ENCODE measurements at regions of chr4 and their contacts with region 1.

Region 1: GRCh38 chr4:127880764-127881562 is at the start of gene PLK4:
- DNase-seq: peak; percentile 99
- H3K4me3 Mint-ChIP-seq: peak within 1 kb of the TSS; percentile 97
- H3K27ac Mint-ChIP-seq: peak within 1 kb of the TSS; percentile 93
- H3K4me1 Mint-ChIP-seq: peaks cover 25% of the 10 kb centered on the region
- H3K27me3 Mint-ChIP-seq: peaks cover 2% of the 10 kb centered on the region
- total RNA-seq, gene PLK4: 44.5 and 44.7 TPM in 2 replicates

Region 2: GRCh38 chr4:127782274-127783025 is 98.5 kb before region 1 on chr4 and contains the start of gene HSPA4L:
- intact Hi-C with region 1: loop called (anchors 1 kb)
- DNase-seq: peak; percentile 89
- H3K4me3 Mint-ChIP-seq: peak within 1 kb of the TSS; percentile 94
- H3K27ac Mint-ChIP-seq: peak within 1 kb of the TSS; percentile 91
- H3K4me1 Mint-ChIP-seq: peaks cover 18% of the 10 kb centered on the region
- H3K27me3 Mint-ChIP-seq: peaks cover 72% of the 10 kb centered on the region
- total RNA-seq, gene HSPA4L: 1.3 and 1.7 TPM in 2 replicates

Region 3: GRCh38 chr4:127870688-127871087 is 10.3 kb before region 1 on chr4:
- intact Hi-C with region 1: loop called (anchors 1 kb)
- DNase-seq: no peak
- H3K4me3 Mint-ChIP-seq: no peak overlapping the region
- H3K27ac Mint-ChIP-seq: no peak overlapping the region
- H3K4me1 Mint-ChIP-seq: peaks cover 5% of the 10 kb centered on the region
- H3K27me3 Mint-ChIP-seq: no peaks in the 10 kb centered on the region

Region 4: DNA sequence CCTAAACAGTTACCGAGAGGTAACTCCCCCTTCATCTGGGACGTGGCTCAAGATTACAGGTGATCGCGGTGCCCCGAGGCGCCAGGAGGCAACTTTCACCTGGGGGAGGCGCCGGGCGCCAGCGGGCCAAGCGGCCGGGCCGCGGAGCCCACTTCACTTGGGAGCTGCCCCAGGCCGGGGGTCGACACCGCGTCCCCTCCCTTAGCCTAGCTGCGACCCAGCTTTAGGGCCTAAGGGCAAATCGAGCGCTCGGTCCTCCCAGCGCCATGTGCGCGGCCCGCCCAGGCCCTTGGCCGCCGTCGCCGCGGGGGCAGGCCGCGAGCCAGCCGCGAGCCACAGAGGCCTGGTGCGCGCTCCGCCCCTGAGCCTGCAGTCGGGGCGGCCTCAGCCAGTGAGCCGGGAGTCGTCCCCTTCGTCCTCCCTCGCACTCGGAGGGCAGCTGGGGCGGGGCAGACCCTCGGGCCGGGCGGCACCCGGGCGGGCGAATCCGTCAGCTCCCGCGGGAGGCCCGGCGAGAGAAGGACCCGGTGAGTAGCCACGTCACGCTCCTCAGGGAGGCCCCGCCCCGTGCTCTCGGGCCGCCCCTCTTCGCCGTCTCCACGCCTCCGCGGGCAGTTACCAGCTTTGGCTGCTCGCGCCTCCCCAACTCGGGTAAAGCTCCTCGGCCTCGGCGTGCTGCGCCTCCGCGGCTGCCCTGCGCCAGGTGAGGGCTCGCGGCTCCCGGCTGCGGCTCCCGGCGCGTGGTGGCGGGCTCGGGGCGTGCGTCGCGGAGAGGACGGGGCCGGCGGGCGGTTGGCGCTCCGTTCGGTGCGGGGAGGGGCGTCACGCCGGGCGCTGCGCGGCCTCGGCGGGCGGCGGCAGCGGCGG is 180.0 kb after region 1 on chr4 and contains the start of gene LARP1B:
- intact Hi-C with region 1: loop called (anchors 1 kb)
- DNase-seq: peak; percentile 98
- H3K4me3 Mint-ChIP-seq: peak within 1 kb of the TSS; percentile 90
- H3K27ac Mint-ChIP-seq: peak within 1 kb of the TSS; percentile 94
- H3K4me1 Mint-ChIP-seq: peaks cover 11% of the 10 kb centered on the region
- H3K27me3 Mint-ChIP-seq: peaks cover 3% of the 10 kb centered on the region
- total RNA-seq, gene LARP1B: 31.1 and 32.6 TPM in 2 replicates

Measured in activated CD4-positive, alpha-beta T cell treated with anti-CD3 and anti-CD28 coated beads, Interleukin-2, amount 10 ng/mL, durations not matched to agents 24 days and 14 days (primary cell).